Transverse colon (tissue), 4 donors: ENCODE measurements at regions of chrX and their contacts with region 1.

Region 1: GRCh38 chrX:77910108-77910840 is at the start of gene ATP7A:
- DNase-seq: peak; percentile 91
- H3K4me3 ChIP-seq: peak within 1 kb of the TSS; percentile 44 to 53 (median 48)
- H3K27ac ChIP-seq: peak within 1 kb of the TSS; percentile 83 to 90 (median 88)
- H3K4me1 ChIP-seq: peaks cover 0 to 10% (median 0%) of the 10 kb centered on the region in 4 donors
- H3K27me3 ChIP-seq: no peaks in the 10 kb centered on the region
- CTCF ChIP-seq: peak in 4 of 5 experiments; percentile 36 to 70 (median 54)
- EP300 ChIP-seq: no peak
- POLR2A ChIP-seq: peak; percentile 77
- total RNA-seq, gene ATP7A: 1.1 to 13.8 (median 6.3) TPM

Region 2: DNA sequence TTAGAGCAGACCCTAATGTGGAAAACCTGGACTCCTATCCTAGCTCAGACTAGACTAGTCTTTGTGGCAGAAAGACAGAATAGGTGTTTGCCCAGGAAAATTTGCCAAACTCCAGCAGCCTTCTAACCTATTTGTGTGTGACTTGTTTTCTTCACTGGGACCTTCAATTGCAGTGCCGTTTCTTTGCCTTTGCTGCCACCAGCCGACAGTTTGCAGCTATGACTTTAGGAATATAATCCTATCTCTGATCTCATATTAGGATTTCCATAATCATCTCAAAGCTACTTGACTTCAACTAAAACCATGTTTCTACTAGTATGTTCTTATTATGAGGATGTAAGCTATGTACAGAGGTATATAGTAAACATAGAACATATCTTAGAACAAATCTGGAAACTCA is 119.4 kb after region 1 on chrX:
- in situ Hi-C with region 1: loop called in 2 of 4 experiments (anchors 10 kb)
- intact Hi-C with region 1: no loop called
- DNase-seq: peak; percentile 21
- H3K4me3 ChIP-seq: no peak overlapping the region
- H3K27ac ChIP-seq: no peak overlapping the region
- H3K4me1 ChIP-seq: no peaks in the 10 kb centered on the region
- H3K27me3 ChIP-seq: no peaks in the 10 kb centered on the region
- CTCF ChIP-seq: peak; percentile 6 to 31 (median 27)
- EP300 ChIP-seq: no peak
- POLR2A ChIP-seq: no peak

Region 3: GRCh38 chrX:78103623-78104446 is 193.6 kb after region 1 on chrX and contains the start of gene PGK1:
- in situ Hi-C with region 1: loop called in 1 of 4 experiments (anchors 25 kb)
- intact Hi-C with region 1: no loop called
- DNase-seq: peak; percentile 96
- H3K4me3 ChIP-seq: peak within 1 kb of the TSS; percentile 60 to 91 (median 81)
- H3K27ac ChIP-seq: peak within 1 kb of the TSS; percentile 92 to 99 (median 98)
- H3K4me1 ChIP-seq: peaks cover 0 to 37% (median 9%) of the 10 kb centered on the region in 4 donors
- H3K27me3 ChIP-seq: no peaks in the 10 kb centered on the region
- CTCF ChIP-seq: no peak
- EP300 ChIP-seq: peak; percentile 85
- POLR2A ChIP-seq: peak; percentile 98
- total RNA-seq, gene PGK1: 35.6 to 207 (median 181) TPM